ENCODE measurements at regions of chr22 and their contacts with region 1.

Region 1: GRCh38 chr22:17171313-17172171 is 12.5 kb upstream of the HDHD5 start:
- DNase-seq: peak; percentile 95

Region 2: GRCh38 chr22:17074648-17075002 is 96.9 kb before region 1 on chr22:
- CTCF ChIA-PET with region 1: interaction called, 14 read pairs
- POLR2A ChIA-PET with region 1: interaction called, 7 read pairs
- DNase-seq: no peak

Region 3: DNA sequence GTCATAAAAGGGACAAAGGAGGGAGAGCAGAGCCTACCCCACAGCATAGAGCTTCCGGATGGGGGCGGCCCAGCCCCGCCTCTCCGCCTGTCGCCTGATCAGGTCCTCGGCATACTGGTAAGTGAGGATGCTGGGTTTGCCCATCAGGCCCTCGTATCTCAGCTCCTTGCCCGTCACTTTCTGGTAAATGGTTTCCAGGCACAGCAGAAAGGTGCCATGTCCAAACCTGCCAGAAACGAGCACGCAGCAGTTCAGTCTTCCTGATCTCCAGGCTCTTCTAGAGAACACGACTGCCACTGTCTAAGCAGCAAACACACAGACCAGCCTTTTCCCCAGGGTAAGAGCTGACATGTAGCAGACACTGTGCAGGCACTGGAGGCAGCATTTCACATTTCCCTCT is 33.0 kb before region 1 on chr22:
- CTCF ChIA-PET with region 1: no interaction called
- POLR2A ChIA-PET with region 1: no interaction called
- DNase-seq: no peak

Region 4: GRCh38 chr22:17158568-17159503 is 12.7 kb before region 1 on chr22 and contains the start of gene HDHD5:
- CTCF ChIA-PET with region 1: interaction called, 38 read pairs
- POLR2A ChIA-PET with region 1: interaction called, 39 read pairs
- DNase-seq: peak; percentile 92

Region 5: DNA sequence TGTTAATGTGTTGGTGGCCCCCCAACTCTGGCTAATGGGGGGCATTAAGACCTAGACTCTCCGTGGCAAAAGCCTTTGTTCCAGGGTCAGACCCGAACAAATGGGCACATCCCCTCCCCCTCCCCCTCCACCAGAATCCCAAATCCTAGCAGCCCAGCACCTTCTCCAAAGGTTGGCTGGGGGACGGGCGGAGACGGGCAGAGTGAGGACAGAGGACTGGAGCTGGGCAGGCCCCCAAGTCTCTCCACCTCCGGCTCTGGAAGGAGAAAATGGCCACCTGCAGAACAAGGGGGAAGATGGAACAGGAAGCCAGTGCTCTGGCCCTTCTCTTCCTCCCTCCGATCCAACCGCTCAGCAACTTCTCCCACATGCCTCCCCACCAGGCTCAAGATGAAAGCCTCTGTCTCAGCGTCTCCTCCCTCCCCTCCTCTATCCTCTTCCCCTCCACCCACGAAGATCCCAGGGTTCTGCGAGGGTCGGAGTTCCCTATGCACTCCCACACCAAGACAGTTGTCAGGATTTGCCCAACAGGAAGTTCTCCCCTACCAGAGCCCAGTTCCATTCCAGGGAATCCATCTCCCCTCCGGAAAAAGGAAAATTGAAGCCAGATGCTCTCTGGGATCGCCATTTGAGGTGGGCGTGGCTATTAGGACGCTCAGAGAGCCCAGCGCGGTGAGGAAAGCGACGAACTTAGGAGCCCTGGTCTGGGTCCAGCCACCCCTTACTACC is 27.6 kb after region 1 on chr22:
- CTCF ChIA-PET with region 1: interaction called, 12 read pairs
- POLR2A ChIA-PET with region 1: interaction called, 12 read pairs
- DNase-seq: no peak

Region 6: GRCh38 chr22:17358415-17358814 is 186.9 kb after region 1 on chr22:
- CTCF ChIA-PET with region 1: no interaction called
- POLR2A ChIA-PET with region 1: no interaction called
- DNase-seq: no peak

Region 7: GRCh38 chr22:17368554-17369438 is 197.3 kb after region 1 on chr22:
- CTCF ChIA-PET with region 1: interaction called, 6 read pairs
- POLR2A ChIA-PET with region 1: interaction called, 15 read pairs
- DNase-seq: peak; percentile 82

Region 8: DNA sequence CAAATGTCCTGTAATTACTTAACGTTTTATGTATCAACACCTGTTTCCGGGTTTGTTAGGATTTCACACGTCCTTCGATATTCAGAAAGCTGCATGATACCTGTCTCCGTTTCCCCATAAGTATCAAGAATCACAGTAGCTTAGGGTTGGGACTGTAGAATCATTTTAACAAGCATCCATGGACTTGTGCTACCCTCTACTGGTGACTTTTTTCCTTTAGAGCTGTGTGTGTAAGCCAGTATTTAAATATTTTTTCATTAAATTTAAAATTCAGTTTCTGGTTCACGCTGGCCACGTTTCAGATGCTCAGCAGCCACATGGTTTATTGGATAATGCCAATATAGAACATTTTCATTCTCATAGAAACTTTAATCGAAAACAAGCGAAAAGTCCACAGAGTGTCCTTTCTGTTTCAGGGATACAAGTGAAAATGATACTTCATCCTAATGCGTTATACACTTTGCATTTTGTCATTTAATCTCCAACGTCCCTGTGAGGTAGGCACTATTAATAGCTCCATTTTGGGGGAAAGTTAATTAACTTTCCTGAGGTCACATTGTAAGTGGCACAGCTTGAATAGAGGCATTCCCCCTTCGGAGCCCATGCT is 330.2 kb after region 1 on chr22:
- CTCF ChIA-PET with region 1: interaction called, 27 read pairs
- POLR2A ChIA-PET with region 1: interaction called, 20 read pairs
- DNase-seq: peak; percentile 68